ENCODE measurements at regions of chr10 and their contacts with region 1.

Region 1: DNA sequence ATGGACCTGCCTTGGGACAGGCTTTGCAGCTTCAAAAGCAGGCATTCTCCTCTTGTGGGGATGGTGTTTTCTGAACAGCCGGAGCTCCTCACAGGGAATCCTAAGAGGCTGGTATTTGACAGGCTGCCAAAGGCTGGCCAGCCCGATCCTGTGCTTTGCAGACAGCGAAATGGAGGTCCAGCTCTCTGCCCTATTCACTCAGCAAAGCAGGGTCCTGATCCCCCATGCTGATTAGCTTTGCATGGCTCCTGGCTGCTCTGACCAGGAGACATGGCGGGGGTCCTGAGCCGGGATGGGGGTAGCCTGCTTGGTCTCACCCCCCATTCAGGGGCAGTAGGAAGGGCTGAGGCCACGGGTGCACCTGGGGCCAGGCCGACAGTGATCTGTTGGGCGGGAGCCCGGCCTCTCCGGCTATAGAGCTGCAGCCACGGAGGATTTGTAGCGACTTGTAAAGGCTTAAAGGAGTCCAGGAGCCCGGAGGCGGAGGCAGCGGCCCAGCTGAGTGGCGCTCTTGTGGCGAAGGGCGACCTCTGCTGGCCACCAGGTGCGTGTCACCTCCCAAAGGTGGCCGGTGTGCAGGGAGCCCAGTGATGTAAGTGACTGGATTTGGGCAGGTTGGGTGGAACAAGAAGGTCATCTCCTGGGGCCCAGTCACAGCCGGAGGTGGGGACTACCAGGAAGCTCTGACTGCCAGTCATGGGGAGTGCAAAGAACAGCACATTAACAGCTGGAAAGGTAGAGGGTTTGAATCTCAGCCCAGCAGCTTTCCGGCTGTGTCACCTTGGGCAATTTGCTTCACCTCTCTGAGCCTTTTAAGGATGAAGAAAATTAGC is 126.5 kb downstream of the ZMIZ1 start:
- DNase-seq: peak; percentile 84
- H3K4me3 ChIP-seq: no peak overlapping the region
- H3K27ac ChIP-seq: no peak overlapping the region
- H3K4me1 ChIP-seq: peaks cover 17% of the 10 kb centered on the region
- H3K27me3 ChIP-seq: no peaks in the 10 kb centered on the region
- CTCF ChIP-seq: peak; percentile 88 to 93
- POLR2A ChIP-seq: no peak

Region 2: GRCh38 chr10:78458983-78459638 is 736.2 kb before region 1 on chr10:
- CTCF ChIA-PET with region 1: no interaction called
- POLR2A ChIA-PET with region 1: no interaction called
- dilution Hi-C with region 1: no loop called
- intact Hi-C with region 1: loop called (anchors 10 kb)
- DNase-seq: peak; percentile 98
- H3K4me3 ChIP-seq: no peak overlapping the region
- H3K27ac ChIP-seq: peak overlapping the region; percentile 99
- H3K4me1 ChIP-seq: peaks cover 43% of the 10 kb centered on the region
- H3K27me3 ChIP-seq: no peaks in the 10 kb centered on the region
- CTCF ChIP-seq: no peak
- POLR2A ChIP-seq: peak; percentile 87

Region 3: GRCh38 chr10:78852466-78853240 is 342.7 kb before region 1 on chr10:
- CTCF ChIA-PET with region 1: interaction called, 19 read pairs
- POLR2A ChIA-PET with region 1: no interaction called
- dilution Hi-C with region 1: no loop called
- intact Hi-C with region 1: loop called (anchors 1 kb)
- DNase-seq: peak; percentile 11
- H3K4me3 ChIP-seq: no peak overlapping the region
- H3K27ac ChIP-seq: no peak overlapping the region
- H3K4me1 ChIP-seq: no peaks in the 10 kb centered on the region
- H3K27me3 ChIP-seq: peaks cover 0 to 9% of the 10 kb centered on the region in 2 experiments
- CTCF ChIP-seq: peak; percentile 17 to 30
- POLR2A ChIP-seq: no peak

Region 4: GRCh38 chr10:79068562-79069324 is 126.6 kb before region 1 on chr10 and contains the start of gene ZMIZ1:
- CTCF ChIA-PET with region 1: interaction called, 85 read pairs
- POLR2A ChIA-PET with region 1: interaction called, 3 read pairs
- dilution Hi-C with region 1: no loop called
- intact Hi-C with region 1: loop called (anchors 1 kb)
- DNase-seq: peak; percentile 87
- H3K4me3 ChIP-seq: peak within 1 kb of the TSS; percentile 58 to 81 (median 73)
- H3K27ac ChIP-seq: peak within 1 kb of the TSS; percentile 69
- H3K4me1 ChIP-seq: peaks cover 30% of the 10 kb centered on the region
- H3K27me3 ChIP-seq: no peaks in the 10 kb centered on the region
- CTCF ChIP-seq: peak in 1 of 2 donors; percentile 15
- POLR2A ChIP-seq: peak; percentile 81
- total RNA-seq, gene ZMIZ1: 46.7 and 49.6 TPM in 2 replicates

Region 5: GRCh38 chr10:79112881-79113431 is 82.4 kb before region 1 on chr10:
- CTCF ChIA-PET with region 1: interaction called, 10 read pairs
- POLR2A ChIA-PET with region 1: no interaction called
- dilution Hi-C with region 1: no loop called
- intact Hi-C with region 1: no loop called
- DNase-seq: peak; percentile 36
- H3K4me3 ChIP-seq: no peak overlapping the region
- H3K27ac ChIP-seq: peak overlapping the region; percentile 35
- H3K4me1 ChIP-seq: peaks cover 11% of the 10 kb centered on the region
- H3K27me3 ChIP-seq: no peaks in the 10 kb centered on the region
- CTCF ChIP-seq: no peak
- POLR2A ChIP-seq: no peak

Region 6: DNA sequence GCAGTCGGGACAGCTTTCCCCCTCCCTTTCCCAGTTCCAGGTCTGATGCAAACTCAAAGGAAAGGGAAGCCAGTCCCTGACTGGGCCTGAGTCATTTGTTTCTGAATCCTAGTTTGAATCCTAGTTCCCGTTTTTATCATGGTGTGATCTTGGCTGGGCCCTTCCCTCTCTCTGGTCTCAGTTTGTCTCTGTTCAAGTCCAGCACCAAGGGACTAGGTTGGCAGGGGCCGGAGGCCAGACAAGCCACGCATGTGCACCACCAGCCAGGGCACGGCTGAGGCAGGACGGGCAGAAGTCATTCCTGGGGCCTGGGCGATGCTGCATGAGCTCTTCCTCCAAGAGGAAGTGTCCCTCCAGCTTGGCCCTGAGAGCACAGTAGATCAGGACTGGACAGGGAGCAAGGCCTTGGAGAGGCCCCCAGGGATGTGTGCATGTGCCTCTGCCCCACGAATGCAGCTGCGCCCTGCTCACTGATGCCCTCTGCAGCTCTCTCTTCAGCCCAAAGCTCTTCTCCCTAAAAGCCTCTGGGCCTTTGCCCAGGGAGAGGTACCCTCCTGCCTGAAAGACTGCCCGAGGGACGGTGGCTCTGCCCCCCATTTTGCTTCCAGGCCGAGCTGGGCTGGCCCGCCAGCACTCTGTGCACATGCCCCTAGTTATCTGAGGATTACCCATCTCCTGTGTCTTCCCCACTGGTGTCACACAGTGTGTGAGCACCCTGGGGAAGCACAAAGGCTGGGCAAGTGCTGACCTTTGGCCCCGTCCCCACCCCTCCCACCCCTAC is 39.8 kb before region 1 on chr10:
- CTCF ChIA-PET with region 1: interaction called, 41 read pairs
- POLR2A ChIA-PET with region 1: no interaction called
- dilution Hi-C with region 1: no loop called
- intact Hi-C with region 1: loop called (anchors 1 kb)
- DNase-seq: peak; percentile 66
- H3K4me3 ChIP-seq: no peak overlapping the region
- H3K27ac ChIP-seq: peak overlapping the region; percentile 77
- H3K4me1 ChIP-seq: peaks cover 76% of the 10 kb centered on the region
- H3K27me3 ChIP-seq: no peaks in the 10 kb centered on the region
- CTCF ChIP-seq: peak in 1 of 2 donors; percentile 34
- POLR2A ChIP-seq: no peak

Measured in endothelial cell of umbilical vein (primary cell).